Panc1 (cell line): ENCODE measurements at regions of chr2 and their contacts with region 1.

Region 1: GRCh38 chr2:41879235-41879916 is 168.4 kb upstream of the PKDCC start:
- DNase-seq: no peak
- ATAC-seq: peak; percentile 58; the same call in 1 of the 2 replicates
- H3K4me3 ChIP-seq: no peak overlapping the region
- H3K27ac ChIP-seq: no peak overlapping the region
- H3K4me1 ChIP-seq: no peaks in the 10 kb centered on the region
- H3K27me3 ChIP-seq: no peaks in the 10 kb centered on the region
- CTCF ChIP-seq: no peak

Region 2: GRCh38 chr2:42050010-42050702 is 170.8 kb after region 1 on chr2:
- CTCF ChIA-PET with region 1: no interaction called
- POLR2A ChIA-PET with region 1: interaction called, 11 read pairs
- in situ Hi-C with region 1: no loop called
- intact Hi-C with region 1: no loop called
- DNase-seq: no peak
- ATAC-seq: no peak
- H3K4me3 ChIP-seq: peak overlapping the region; percentile 54 to 62
- H3K27ac ChIP-seq: no peak overlapping the region; the same call in 1 of the 2 replicates
- H3K4me1 ChIP-seq: peaks cover 54% of the 10 kb centered on the region
- H3K27me3 ChIP-seq: no peaks in the 10 kb centered on the region
- CTCF ChIP-seq: no peak

Region 3: DNA sequence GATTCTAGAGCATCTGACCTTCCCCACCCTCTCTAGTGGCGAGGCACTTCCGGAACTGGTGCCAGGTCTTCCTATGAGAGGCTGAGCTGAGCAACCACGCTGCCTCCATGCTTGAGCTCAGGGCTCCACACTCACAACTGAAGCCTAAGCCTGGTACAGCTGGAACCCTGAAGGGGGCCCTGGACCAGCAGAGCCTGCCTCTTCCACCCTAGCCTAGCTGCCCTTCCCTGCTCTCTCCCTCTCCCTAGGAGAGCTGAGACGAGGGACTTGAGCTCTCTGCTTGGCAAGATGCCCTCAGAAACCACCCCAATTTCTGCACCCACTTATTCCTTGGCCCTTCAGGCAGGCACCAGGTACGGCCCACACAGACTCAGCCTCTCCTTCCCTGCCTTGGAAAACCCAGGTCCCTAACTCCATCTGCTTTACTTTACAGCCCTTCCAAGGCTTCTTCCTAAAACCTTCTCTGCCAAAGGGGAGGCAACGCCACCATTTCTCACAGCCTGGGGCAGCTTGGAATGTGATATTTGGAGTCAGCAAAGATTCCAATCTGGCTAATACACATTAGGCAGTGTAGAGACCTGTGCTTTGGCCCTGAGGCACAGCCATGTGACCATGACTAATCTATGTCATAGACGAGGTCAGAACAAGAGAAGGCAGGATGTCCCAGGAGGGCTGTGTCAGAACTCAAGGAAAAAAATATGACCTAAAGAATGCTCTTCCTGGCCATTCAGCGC is 462.9 kb after region 1 on chr2:
- CTCF ChIA-PET with region 1: no interaction called
- POLR2A ChIA-PET with region 1: no interaction called
- in situ Hi-C with region 1: no loop called
- intact Hi-C with region 1: no loop called
- DNase-seq: no peak
- ATAC-seq: peak; percentile 47
- H3K4me3 ChIP-seq: no peak overlapping the region
- H3K27ac ChIP-seq: peak overlapping the region; percentile 34; the same call in 1 of the 2 replicates
- H3K4me1 ChIP-seq: peaks cover 13% of the 10 kb centered on the region
- H3K27me3 ChIP-seq: no peaks in the 10 kb centered on the region
- CTCF ChIP-seq: no peak

Region 4: DNA sequence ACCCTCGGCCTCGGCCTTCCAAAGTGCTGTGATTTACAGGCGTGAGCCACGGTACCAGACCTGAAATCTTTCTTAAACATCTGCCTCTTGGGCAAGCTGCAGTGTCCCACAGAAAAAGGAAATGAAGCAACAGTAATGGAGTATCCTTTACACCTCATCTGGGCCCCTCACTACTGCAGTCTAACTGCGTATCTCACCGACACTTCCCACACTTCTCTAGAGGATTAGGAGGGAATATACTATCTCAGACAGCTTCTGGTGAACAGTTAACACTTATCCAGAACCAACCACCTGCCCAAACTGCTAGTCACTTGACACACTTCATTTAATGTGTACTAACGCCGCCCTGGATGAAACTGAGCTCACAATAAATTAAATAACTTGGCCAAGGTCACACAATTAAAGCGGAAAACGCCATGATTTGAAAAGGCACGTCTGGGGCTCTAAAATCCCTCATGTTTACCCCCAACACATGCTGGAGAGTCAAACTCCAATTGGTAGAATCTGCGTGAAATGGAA is 480.6 kb after region 1 on chr2:
- CTCF ChIA-PET with region 1: no interaction called
- POLR2A ChIA-PET with region 1: interaction called, 18 read pairs
- in situ Hi-C with region 1: no loop called
- intact Hi-C with region 1: no loop called
- DNase-seq: no peak
- ATAC-seq: no peak
- H3K4me3 ChIP-seq: peak overlapping the region; percentile 94 to 97
- H3K27ac ChIP-seq: peak overlapping the region; percentile 88
- H3K4me1 ChIP-seq: peaks cover 7% of the 10 kb centered on the region; the same call in 1 of the 2 replicates
- H3K27me3 ChIP-seq: no peaks in the 10 kb centered on the region
- CTCF ChIP-seq: no peak